RWPE1 (cell line): ENCODE measurements at regions of chr4 and their contacts with region 1.

Region 1: DNA sequence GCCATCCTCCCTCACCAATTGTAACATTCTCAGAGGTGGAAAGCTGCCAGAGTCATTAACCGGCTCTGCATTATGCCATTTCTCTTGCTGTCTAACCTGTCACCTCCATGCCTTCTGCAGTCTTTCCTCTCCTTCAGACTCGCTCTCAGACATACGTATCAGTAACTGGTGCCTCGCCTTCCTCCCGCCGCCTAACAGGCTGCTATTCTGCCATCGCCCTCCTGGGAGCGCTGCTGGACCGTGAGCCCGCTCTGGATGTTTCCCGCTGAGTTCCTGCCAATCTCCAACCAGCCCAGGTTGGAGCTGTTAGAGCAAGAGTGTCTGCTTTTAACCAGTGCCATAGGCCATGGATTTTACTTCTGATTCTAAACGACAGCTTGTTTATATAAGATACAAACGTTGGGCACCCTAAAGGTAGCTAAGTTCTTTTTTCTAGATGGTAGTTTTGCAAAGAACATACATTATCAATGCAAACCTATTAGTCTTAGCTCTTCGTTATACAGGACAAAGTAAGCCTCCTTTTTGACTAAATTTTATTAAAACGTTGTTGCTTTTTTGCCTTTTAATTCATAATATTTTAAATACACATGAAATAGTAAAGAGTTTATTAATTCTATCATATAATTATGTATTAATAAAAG is 59.5 kb upstream of the NEIL3 start:
- DNase-seq: peak; percentile 65
- H3K27ac ChIP-seq: no peak overlapping the region
- CTCF ChIP-seq: peak; percentile 97

Region 2: GRCh38 chr4:177339477-177340374 is 89.5 kb after region 1 on chr4:
- CTCF ChIA-PET with region 1: interaction called, 39 read pairs
- POLR2A ChIA-PET with region 1: no interaction called
- DNase-seq: peak; percentile 41
- H3K27ac ChIP-seq: no peak overlapping the region
- CTCF ChIP-seq: peak; percentile 76